GM12878 (cell line): ENCODE measurements at regions of chr2 and their contacts with region 1.

Region 1: GRCh38 chr2:10331027-10331701 is 28.5 kb downstream of the HPCAL1 start:
- DNase-seq: peak; percentile 40
- ATAC-seq: peak; percentile 76
- H3K4me3 ChIP-seq: peak overlapping the region; percentile 62; the same call in 1 of the 2 replicates
- H3K27ac ChIP-seq: no peak overlapping the region; the same call in 1 of the 2 replicates
- H3K4me1 ChIP-seq: peaks cover 23% of the 10 kb centered on the region
- H3K27me3 ChIP-seq: no peaks in the 10 kb centered on the region
- CTCF ChIP-seq: no peak; a peak in 1 of 6 replicates
- EP300 ChIP-seq: no peak
- POLR2A ChIP-seq: peak; percentile 59
- RAD21 ChIP-seq: no peak

Region 2: DNA sequence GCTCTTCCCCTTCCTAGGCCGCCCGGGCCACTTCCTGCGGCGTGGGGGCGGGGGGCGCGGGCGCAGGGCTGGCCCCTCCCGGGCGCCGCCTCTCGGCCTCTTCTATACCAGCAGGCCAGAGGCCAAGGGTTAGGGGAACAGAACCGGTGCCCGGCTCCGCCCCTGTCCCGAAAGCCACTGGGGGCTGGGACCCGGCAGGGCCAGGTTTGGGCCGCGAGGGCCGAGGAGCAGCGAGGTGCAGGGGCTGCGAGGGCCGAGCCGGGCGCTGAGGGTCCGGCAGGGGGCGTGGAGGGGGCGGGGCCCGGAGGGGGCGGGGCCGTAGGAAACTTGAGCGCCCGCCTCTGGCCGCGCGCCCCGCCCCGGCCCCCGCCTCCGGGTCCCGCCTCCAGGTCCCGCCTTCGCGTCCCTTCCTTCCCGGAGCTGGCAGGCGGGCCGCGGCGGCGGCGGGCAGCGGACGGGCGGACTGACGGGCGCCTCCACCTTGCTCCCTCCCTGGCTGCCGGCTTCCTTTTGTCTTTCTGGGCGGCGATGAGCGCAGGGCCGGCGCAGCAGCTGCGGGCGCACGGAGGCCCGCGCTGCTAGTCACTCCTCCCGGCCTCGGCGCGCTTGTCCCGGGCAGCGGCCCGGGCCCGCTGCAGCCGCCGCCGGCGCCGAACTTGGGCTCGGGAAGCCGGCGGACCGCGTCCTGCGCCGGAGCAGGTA is 28.5 kb before region 1 on chr2 and contains the start of gene HPCAL1:
- CTCF ChIA-PET with region 1: interaction called, 15 read pairs
- POLR2A ChIA-PET with region 1: interaction called, 7 read pairs
- RAD21 ChIA-PET with region 1: interaction called, 40 read pairs
- SMC1A ChIA-PET with region 1: interaction called, 8 read pairs
- in situ Hi-C with region 1: no loop called
- intact Hi-C with region 1: no loop called
- DNase-seq: peak; percentile 40
- ATAC-seq: peak; percentile 86
- H3K4me3 ChIP-seq: peak within 1 kb of the TSS; percentile 69
- H3K27ac ChIP-seq: peak within 1 kb of the TSS; percentile 61
- H3K4me1 ChIP-seq: peaks cover 16% of the 10 kb centered on the region
- H3K27me3 ChIP-seq: no peaks in the 10 kb centered on the region; a peak in 1 of 4 replicates
- CTCF ChIP-seq: peak; percentile 41 to 52 (median 45); a peak in 5 of 6 replicates
- EP300 ChIP-seq: no peak
- POLR2A ChIP-seq: no peak
- RAD21 ChIP-seq: peak; percentile 19; the same call in 1 of the 2 replicates
- polyA plus RNA-seq, gene HPCAL1: 0.40 to 1.3 TPM

Region 3: GRCh38 chr2:10382354-10383061 is 51.3 kb after region 1 on chr2:
- CTCF ChIA-PET with region 1: interaction called, 12 read pairs
- POLR2A ChIA-PET with region 1: interaction called, 19 read pairs
- RAD21 ChIA-PET with region 1: interaction called, 11 read pairs
- SMC1A ChIA-PET with region 1: interaction called, 6 read pairs
- in situ Hi-C with region 1: no loop called
- intact Hi-C with region 1: no loop called
- DNase-seq: peak; percentile 60
- ATAC-seq: peak; percentile 84
- H3K4me3 ChIP-seq: no peak overlapping the region
- H3K27ac ChIP-seq: no peak overlapping the region
- H3K4me1 ChIP-seq: peaks cover 29% of the 10 kb centered on the region
- H3K27me3 ChIP-seq: no peaks in the 10 kb centered on the region
- CTCF ChIP-seq: no peak
- EP300 ChIP-seq: no peak
- POLR2A ChIP-seq: no peak
- RAD21 ChIP-seq: no peak